Left cardiac atrium (tissue), 4 donors: ENCODE measurements at regions of chr2 and their contacts with region 1.

Region 1: GRCh38 chr2:46601328-46601963 is 122.1 kb downstream of the TMEM247 start:
- DNase-seq: no peak
- ATAC-seq: no peak

Region 2: GRCh38 chr2:45909663-45910191 is 691.7 kb before region 1 on chr2:
- intact Hi-C with region 1: no loop called
- DNase-seq: no peak
- ATAC-seq: no peak

Region 3: DNA sequence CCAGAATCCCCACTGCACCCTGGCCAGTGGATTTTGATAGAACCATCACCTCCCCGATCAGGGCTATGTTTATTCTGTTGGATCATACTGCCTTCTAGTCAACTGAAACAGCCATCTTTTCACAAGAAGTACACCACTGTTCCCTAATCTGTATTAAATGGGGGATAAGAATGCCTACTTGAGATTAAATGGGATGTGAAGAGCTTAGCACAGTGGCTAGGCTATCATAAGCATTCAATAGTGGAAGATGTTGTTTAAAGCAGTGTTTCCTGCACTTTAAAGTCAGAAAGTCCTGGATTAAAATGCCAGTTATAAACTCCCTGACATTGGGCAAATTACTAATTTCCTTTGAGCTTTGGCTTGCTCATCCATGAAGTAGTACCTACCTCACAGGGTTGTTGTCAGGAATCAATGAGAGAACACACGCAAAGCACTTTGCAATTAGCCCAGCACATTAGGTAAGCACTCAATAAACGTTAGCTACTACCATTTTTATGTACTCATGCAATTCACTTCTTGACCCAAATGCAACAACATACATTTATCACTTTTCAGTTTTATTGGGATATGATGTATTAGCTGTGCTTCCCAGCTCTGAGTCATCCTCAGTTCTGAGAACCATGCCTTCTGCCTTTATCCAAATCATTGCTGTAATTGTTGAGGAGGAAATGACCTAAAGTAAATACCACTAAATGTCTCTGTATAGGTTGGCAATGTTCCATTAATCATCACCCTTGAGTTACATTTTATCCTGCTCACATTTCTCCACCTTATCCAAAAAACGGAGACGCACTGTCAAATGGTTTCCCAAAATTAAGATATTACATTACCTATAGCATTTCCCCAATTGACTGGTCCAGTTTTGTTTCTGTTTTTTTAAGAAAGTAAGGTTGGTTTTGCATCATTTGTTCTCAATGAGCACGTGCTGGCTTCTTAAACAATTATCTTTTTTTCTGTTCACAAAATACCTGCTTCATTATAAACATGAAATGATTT is 120.0 kb before region 1 on chr2:
- intact Hi-C with region 1: loop called in 1 of 2 experiments (anchors 5 kb)
- DNase-seq: no peak
- ATAC-seq: no peak

Region 4: GRCh38 chr2:46737577-46737976 is 136.1 kb after region 1 on chr2:
- intact Hi-C with region 1: no loop called
- DNase-seq: no peak
- ATAC-seq: no peak